ENCODE measurements at regions of chr17 and their contacts with region 1.

Region 1: DNA sequence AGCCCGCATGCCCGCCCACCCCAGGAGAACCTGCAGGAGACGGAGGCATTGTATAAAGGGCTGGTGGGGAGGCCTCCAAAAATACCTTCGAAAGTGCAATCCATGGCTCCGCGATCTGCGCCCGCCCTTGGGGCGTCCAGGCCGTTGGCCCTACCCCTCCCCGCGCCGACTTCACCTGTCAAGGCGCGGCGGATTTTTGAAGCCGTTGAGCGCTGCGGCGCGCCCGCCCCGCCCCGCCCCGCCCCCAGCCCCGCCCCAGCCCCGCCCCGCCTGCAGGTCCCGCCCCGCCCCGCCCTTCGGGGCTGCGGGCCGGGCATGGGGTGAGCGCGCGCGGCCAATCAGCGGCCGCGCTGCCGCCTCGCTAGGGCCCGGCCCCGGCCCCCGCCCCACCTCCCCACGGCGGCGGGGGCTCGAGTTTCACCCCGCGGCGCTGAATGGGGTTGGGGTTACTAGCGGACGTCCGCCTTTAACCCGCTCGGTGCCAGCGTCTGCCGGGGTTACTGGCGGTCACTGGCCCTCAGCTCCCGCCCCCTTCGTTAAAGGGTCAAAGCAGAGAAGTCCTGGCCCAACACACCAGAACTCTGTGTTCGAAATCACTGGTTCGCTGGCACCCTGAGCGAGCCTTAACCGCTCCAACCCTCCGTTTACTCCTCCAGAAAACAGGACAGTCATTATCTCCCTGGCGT is 13.2 kb downstream of the SREBF1 start:
- DNase-seq: peak; percentile 63 to 92 (median 80)
- ATAC-seq: peak; percentile 87
- H3K4me3 ChIP-seq: peak overlapping the region; percentile 46 to 55
- H3K4me3 Mint-ChIP-seq: peak overlapping the region; percentile 81
- H3K27ac ChIP-seq: peak overlapping the region; percentile 50 to 85
- H3K27ac Mint-ChIP-seq: peak overlapping the region; percentile 95
- H3K4me1 ChIP-seq: peaks cover 95% of the 10 kb centered on the region
- H3K4me1 Mint-ChIP-seq: peaks cover 91% of the 10 kb centered on the region
- H3K27me3 ChIP-seq: no peaks in the 10 kb centered on the region
- H3K27me3 Mint-ChIP-seq: no peaks in the 10 kb centered on the region
- CTCF ChIP-seq: no peak

Region 2: GRCh38 chr17:17745476-17746455 is 77.8 kb before region 1 on chr17:
- CTCF ChIA-PET with region 1: no interaction called
- POLR2A ChIA-PET with region 1: no interaction called
- intact Hi-C with region 1: no loop called
- DNase-seq: no peak
- ATAC-seq: no peak
- H3K4me3 ChIP-seq: no peak overlapping the region
- H3K4me3 Mint-ChIP-seq: no peak overlapping the region
- H3K27ac ChIP-seq: no peak overlapping the region
- H3K27ac Mint-ChIP-seq: no peak overlapping the region
- H3K4me1 ChIP-seq: peaks cover 31% of the 10 kb centered on the region
- H3K4me1 Mint-ChIP-seq: peaks cover 32% of the 10 kb centered on the region
- H3K27me3 ChIP-seq: no peaks in the 10 kb centered on the region
- H3K27me3 Mint-ChIP-seq: no peaks in the 10 kb centered on the region
- CTCF ChIP-seq: no peak

Region 3: DNA sequence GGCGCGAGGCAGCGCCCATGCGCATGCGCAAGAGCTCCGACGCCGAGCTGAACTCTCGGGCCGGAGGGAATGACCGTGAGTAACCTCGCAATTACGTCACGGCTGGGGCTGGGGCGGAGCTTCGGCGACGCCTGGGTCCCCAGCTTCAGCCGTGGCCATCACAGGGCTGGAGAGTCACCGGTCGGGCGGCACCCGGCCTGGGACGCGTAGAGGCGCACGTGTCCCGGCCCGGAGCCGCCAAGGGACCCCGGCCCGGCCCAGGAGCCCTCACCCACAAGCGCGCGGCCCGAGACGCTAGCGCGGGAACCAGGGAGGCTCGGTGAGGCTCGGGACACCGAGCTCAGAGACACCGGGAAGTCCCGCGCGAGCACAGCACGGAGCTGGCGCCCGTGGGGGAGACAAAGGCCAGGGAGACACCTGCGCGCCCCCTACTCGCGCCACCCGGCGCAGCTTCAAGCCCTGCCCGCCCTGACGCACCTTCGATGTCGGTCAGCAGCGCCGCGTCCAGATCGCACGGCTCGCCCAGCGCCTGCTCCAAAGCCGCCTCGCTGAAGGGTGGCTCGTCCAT is 12.8 kb after region 1 on chr17:
- CTCF ChIA-PET with region 1: interaction called, 5 read pairs
- POLR2A ChIA-PET with region 1: interaction called, 9 read pairs
- intact Hi-C with region 1: loop called (anchors 1 kb)
- DNase-seq: peak; percentile 94 to 99 (median 97)
- ATAC-seq: peak; percentile 72
- H3K4me3 ChIP-seq: peak overlapping the region; percentile 87 to 95
- H3K4me3 Mint-ChIP-seq: peak overlapping the region; percentile 88
- H3K27ac ChIP-seq: peak overlapping the region; percentile 99
- H3K27ac Mint-ChIP-seq: peak overlapping the region; percentile 97
- H3K4me1 ChIP-seq: peaks cover 82% of the 10 kb centered on the region
- H3K4me1 Mint-ChIP-seq: peaks cover 75% of the 10 kb centered on the region
- H3K27me3 ChIP-seq: no peaks in the 10 kb centered on the region
- H3K27me3 Mint-ChIP-seq: no peaks in the 10 kb centered on the region
- CTCF ChIP-seq: no peak

Measured in CD8-positive, alpha-beta T cell (primary cell).